ENCODE measurements at regions of chr16 and their contacts with region 1.

Region 1: GRCh38 chr16:17369421-17370222 is 101.1 kb downstream of the XYLT1 start:
- DNase-seq: peak; percentile 88
- ATAC-seq: peak; percentile 87
- H3K4me3 ChIP-seq: peak overlapping the region; percentile 22 to 56 (median 33)
- H3K4me3 Mint-ChIP-seq: peak overlapping the region; percentile 88
- H3K27ac ChIP-seq: peak overlapping the region; percentile 91 to 93
- H3K27ac Mint-ChIP-seq: peak overlapping the region; percentile 96
- H3K4me1 ChIP-seq: peaks cover 82 to 86% of the 10 kb centered on the region in 2 donors
- H3K4me1 Mint-ChIP-seq: peaks cover 87% of the 10 kb centered on the region
- H3K27me3 ChIP-seq: no peaks in the 10 kb centered on the region
- H3K27me3 Mint-ChIP-seq: no peaks in the 10 kb centered on the region
- CTCF ChIP-seq: no peak

Region 2: GRCh38 chr16:17018585-17018939 is 351.1 kb before region 1 on chr16:
- CTCF ChIA-PET with region 1: no interaction called
- POLR2A ChIA-PET with region 1: no interaction called
- intact Hi-C with region 1: loop called (anchors 10 kb)
- DNase-seq: no peak
- ATAC-seq: no peak
- H3K4me3 ChIP-seq: no peak overlapping the region
- H3K4me3 Mint-ChIP-seq: no peak overlapping the region
- H3K27ac ChIP-seq: no peak overlapping the region
- H3K27ac Mint-ChIP-seq: no peak overlapping the region
- H3K4me1 ChIP-seq: peaks cover 12 to 31% of the 10 kb centered on the region in 2 donors
- H3K4me1 Mint-ChIP-seq: peaks cover 45% of the 10 kb centered on the region
- H3K27me3 ChIP-seq: no peaks in the 10 kb centered on the region
- H3K27me3 Mint-ChIP-seq: no peaks in the 10 kb centered on the region
- CTCF ChIP-seq: no peak

Region 3: GRCh38 chr16:17258848-17259713 is 110.5 kb before region 1 on chr16:
- CTCF ChIA-PET with region 1: no interaction called
- POLR2A ChIA-PET with region 1: no interaction called
- intact Hi-C with region 1: loop called (anchors 5 kb)
- DNase-seq: peak; percentile 58
- ATAC-seq: peak; percentile 76
- H3K4me3 ChIP-seq: peak overlapping the region in 4 of 5 experiments; percentile 16 to 51 (median 24)
- H3K4me3 Mint-ChIP-seq: peak overlapping the region; percentile 83
- H3K27ac ChIP-seq: peak overlapping the region; percentile 42 to 65
- H3K27ac Mint-ChIP-seq: peak overlapping the region; percentile 88
- H3K4me1 ChIP-seq: peaks cover 19 to 21% of the 10 kb centered on the region in 2 donors
- H3K4me1 Mint-ChIP-seq: peaks cover 40% of the 10 kb centered on the region
- H3K27me3 ChIP-seq: no peaks in the 10 kb centered on the region
- H3K27me3 Mint-ChIP-seq: no peaks in the 10 kb centered on the region
- CTCF ChIP-seq: no peak

Region 4: GRCh38 chr16:17343028-17343427 is 26.6 kb before region 1 on chr16:
- CTCF ChIA-PET with region 1: interaction called, 11 read pairs
- POLR2A ChIA-PET with region 1: interaction called, 8 read pairs
- intact Hi-C with region 1: loop called (anchors 2 kb)
- DNase-seq: peak; percentile 69
- ATAC-seq: peak; percentile 63
- H3K4me3 ChIP-seq: peak overlapping the region in 2 of 5 experiments; percentile 14 to 17
- H3K4me3 Mint-ChIP-seq: peak overlapping the region; percentile 66
- H3K27ac ChIP-seq: peak overlapping the region; percentile 62 to 72
- H3K27ac Mint-ChIP-seq: peak overlapping the region; percentile 87
- H3K4me1 ChIP-seq: peaks cover 73 to 80% of the 10 kb centered on the region in 2 donors
- H3K4me1 Mint-ChIP-seq: peaks cover 68% of the 10 kb centered on the region
- H3K27me3 ChIP-seq: no peaks in the 10 kb centered on the region
- H3K27me3 Mint-ChIP-seq: no peaks in the 10 kb centered on the region
- CTCF ChIP-seq: no peak

Region 5: GRCh38 chr16:17416461-17417311 is 47.1 kb after region 1 on chr16:
- CTCF ChIA-PET with region 1: interaction called, 24 read pairs
- POLR2A ChIA-PET with region 1: interaction called, 4 read pairs
- intact Hi-C with region 1: loop called (anchors 1 kb)
- DNase-seq: peak; percentile 90
- ATAC-seq: peak; percentile 91
- H3K4me3 ChIP-seq: peak overlapping the region; percentile 2 to 61 (median 40)
- H3K4me3 Mint-ChIP-seq: peak overlapping the region; percentile 85
- H3K27ac ChIP-seq: peak overlapping the region; percentile 76 to 81
- H3K27ac Mint-ChIP-seq: peak overlapping the region; percentile 90
- H3K4me1 ChIP-seq: peaks cover 61 to 68% of the 10 kb centered on the region in 2 donors
- H3K4me1 Mint-ChIP-seq: peaks cover 69% of the 10 kb centered on the region
- H3K27me3 ChIP-seq: no peaks in the 10 kb centered on the region
- H3K27me3 Mint-ChIP-seq: no peaks in the 10 kb centered on the region
- CTCF ChIP-seq: peak; percentile 68